Activated CD4-positive, alpha-beta T cell treated with anti-CD3 and anti-CD28 coated beads, Interleukin-2, amount 10 ng/mL, durations not matched to agents 24 days and 14 days (primary cell): ENCODE measurements at regions of chr16 and their contacts with region 1.

Region 1: GRCh38 chr16:89115216-89115861 is 21.7 kb downstream of the ACSF3 start:
- DNase-seq: peak; percentile 96
- H3K4me3 Mint-ChIP-seq: peak overlapping the region; percentile 83
- H3K27ac Mint-ChIP-seq: peak overlapping the region; percentile 96
- H3K4me1 Mint-ChIP-seq: peaks cover 28% of the 10 kb centered on the region
- H3K27me3 Mint-ChIP-seq: no peaks in the 10 kb centered on the region

Region 2: GRCh38 chr16:88941913-88942909 is 173.1 kb before region 1 on chr16:
- intact Hi-C with region 1: loop called (anchors 1 kb)
- DNase-seq: peak; percentile 85
- H3K4me3 Mint-ChIP-seq: peak overlapping the region; percentile 40
- H3K27ac Mint-ChIP-seq: no peak overlapping the region
- H3K4me1 Mint-ChIP-seq: no peaks in the 10 kb centered on the region
- H3K27me3 Mint-ChIP-seq: peaks cover 42% of the 10 kb centered on the region

Region 3: GRCh38 chr16:89052890-89053592 is 62.3 kb before region 1 on chr16:
- intact Hi-C with region 1: no loop called
- DNase-seq: no peak
- H3K4me3 Mint-ChIP-seq: peak overlapping the region; percentile 83
- H3K27ac Mint-ChIP-seq: no peak overlapping the region
- H3K4me1 Mint-ChIP-seq: peaks cover 2% of the 10 kb centered on the region
- H3K27me3 Mint-ChIP-seq: peaks cover 2% of the 10 kb centered on the region

Region 4: DNA sequence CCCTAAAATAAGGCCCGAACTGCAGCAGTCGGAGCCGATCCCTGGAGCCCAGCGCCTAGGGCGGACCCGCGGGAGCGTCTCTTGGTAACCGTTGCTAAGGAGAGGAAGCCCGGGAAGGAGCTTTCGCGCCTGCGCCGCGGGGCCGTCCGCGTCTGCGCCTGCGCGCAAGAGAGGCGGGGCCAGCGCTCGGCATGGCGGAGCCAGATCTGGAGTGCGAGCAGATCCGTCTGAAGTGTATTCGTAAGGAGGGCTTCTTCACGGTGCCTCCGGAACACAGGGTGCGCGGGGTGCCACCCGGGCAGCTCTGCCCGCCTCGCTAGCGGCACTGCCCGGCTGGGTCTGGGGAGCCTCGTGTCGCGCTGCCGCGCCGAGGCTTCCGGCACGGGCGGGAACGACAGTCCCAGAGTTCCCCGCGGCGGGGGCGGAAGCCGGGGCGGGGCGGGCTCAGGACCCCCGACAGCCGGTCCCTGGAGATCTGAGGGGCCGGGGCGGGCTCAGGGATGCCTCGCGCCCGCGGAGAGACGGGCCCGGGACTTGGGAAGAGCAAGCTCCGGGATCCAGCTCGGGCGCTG is 571.3 kb after region 1 on chr16 and contains the start of gene CDK10:
- intact Hi-C with region 1: no loop called
- DNase-seq: peak; percentile 99
- H3K4me3 Mint-ChIP-seq: peak within 1 kb of the TSS; percentile 95
- H3K27ac Mint-ChIP-seq: peak within 1 kb of the TSS; percentile 95
- H3K4me1 Mint-ChIP-seq: peaks cover 11% of the 10 kb centered on the region
- H3K27me3 Mint-ChIP-seq: no peaks in the 10 kb centered on the region
- total RNA-seq, gene CDK10: 104 and 108 TPM in 2 replicates